Posterior vena cava (tissue), 2 donors: ENCODE measurements at regions of chr4 and their contacts with region 1.

Region 1: DNA sequence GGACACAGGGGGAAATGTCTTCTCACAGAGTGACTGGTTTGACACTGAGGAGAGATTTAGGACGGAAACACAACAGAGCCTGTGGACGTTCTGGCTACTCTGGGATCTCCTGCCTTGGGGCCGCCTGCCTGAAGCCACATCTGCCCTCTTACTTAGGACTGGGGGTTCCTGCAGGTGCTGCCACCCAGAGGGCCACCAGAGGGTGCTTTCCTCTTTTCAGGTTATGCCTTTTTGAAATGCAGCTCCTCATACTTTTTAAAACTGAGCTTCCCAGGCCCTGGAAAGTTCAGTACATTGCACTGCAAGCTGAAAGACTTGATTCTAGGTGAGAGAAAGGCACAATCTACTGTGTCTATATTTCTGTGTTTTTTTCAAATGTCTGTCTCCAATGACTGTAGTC is 92.2 kb upstream of the PGRMC2 start:
- DNase-seq: no peak

Region 2: DNA sequence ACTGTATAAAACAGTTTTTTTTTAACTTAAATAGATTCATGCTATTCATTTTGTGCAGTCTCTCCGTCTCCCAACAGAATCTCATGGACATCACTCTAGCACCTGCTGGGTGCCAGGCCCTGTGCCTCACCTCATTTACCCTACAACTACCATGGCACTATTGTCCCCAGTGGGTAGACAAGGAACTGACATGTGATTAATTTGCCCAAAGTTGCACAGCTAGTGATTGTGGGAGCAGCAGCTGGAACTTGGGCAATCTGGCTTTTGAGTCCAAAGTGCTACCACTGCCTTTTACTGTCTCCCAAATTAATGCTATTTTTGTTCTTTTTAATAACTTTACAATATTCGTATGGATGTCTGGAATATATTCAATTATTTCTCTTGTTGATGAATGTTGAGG is 81.0 kb before region 1 on chr4:
- intact Hi-C with region 1: loop called in 1 of 2 experiments (anchors 10 kb)
- DNase-seq: no peak

Region 3: DNA sequence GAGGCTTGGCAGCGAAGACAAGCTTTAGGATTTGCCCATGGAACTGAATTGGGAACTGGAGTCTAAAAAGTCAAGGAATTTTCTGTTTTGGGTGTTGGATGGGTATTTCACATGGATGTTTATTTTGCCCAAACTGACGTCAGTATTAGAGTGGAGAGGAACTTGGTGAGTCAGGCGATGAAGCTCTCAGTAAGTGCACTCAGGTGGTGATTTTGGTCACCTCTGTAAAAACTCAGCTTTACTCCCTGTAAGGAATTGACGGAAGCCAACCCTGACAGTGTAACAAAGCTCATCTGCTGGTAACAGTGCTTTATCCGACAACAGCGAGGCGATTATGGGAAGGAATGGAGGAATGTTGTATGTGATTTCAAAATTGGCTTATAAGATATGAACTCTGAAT is 15.3 kb before region 1 on chr4:
- intact Hi-C with region 1: no loop called
- DNase-seq: no peak

Region 4: GRCh38 chr4:129344058-129344457 is 964.2 kb after region 1 on chr4:
- intact Hi-C with region 1: no loop called
- DNase-seq: no peak